CD14-positive monocyte (primary cell): ENCODE measurements at regions of chr7 and their contacts with region 1.

Region 1: DNA sequence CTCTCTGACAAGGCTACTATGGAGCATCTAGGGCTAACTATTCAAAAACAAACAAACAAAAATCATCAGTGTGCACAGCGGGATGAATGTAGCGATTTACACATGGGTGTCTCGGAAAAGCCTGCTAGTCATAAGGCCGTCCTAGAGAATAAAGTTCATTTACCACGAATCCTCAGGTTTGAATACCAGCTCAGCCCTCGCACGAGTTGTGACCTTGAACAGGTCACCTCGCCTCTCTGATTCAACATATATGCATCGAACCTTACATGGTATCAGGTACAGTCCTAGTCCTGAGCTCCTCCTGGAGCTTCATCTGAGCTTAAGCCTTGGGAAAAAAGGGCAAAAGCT is 572 bp downstream of the ATP5MF start:
- DNase-seq: no peak
- H3K4me3 ChIP-seq: peak overlapping the region; percentile 87 to 94 (median 87)
- H3K4me3 Mint-ChIP-seq: peak overlapping the region; percentile 85 to 91
- H3K27ac ChIP-seq: peak overlapping the region; percentile 90 to 91
- H3K27ac Mint-ChIP-seq: peak overlapping the region; percentile 87 to 96 (median 94)
- H3K4me1 ChIP-seq: peaks cover 14 to 23% of the 10 kb centered on the region in 2 donors
- H3K4me1 Mint-ChIP-seq: peaks cover 12% of the 10 kb centered on the region
- H3K27me3 ChIP-seq: no peaks in the 10 kb centered on the region
- H3K27me3 Mint-ChIP-seq: peaks cover 11 to 17% (median 12%) of the 10 kb centered on the region in 3 donors
- CTCF ChIP-seq: no peak

Region 2: GRCh38 chr7:99422186-99422585 is 43.2 kb before region 1 on chr7:
- intact Hi-C with region 1: no loop called
- DNase-seq: no peak
- H3K4me3 ChIP-seq: no peak overlapping the region
- H3K4me3 Mint-ChIP-seq: no peak overlapping the region
- H3K27ac ChIP-seq: no peak overlapping the region
- H3K27ac Mint-ChIP-seq: peak overlapping the region in 2 of 7 donors; percentile 33 to 72
- H3K4me1 ChIP-seq: no peaks in the 10 kb centered on the region
- H3K4me1 Mint-ChIP-seq: no peaks in the 10 kb centered on the region
- H3K27me3 ChIP-seq: no peaks in the 10 kb centered on the region
- H3K27me3 Mint-ChIP-seq: peaks cover 0 to 2% (median 0%) of the 10 kb centered on the region in 3 donors
- CTCF ChIP-seq: no peak

Region 3: GRCh38 chr7:99438573-99439480 is 26.6 kb before region 1 on chr7 and contains the starts of genes CPSF4 and PTCD1:
- intact Hi-C with region 1: loop called in 1 of 2 experiments (anchors 1 kb)
- DNase-seq: peak; percentile 87 to 91 (median 89)
- H3K4me3 ChIP-seq: peak within 1 kb of the TSS; percentile 59 to 84 (median 83)
- H3K4me3 Mint-ChIP-seq: peak within 1 kb of the TSS; percentile 96 to 98
- H3K27ac ChIP-seq: peak within 1 kb of the TSS; percentile 66 to 88
- H3K27ac Mint-ChIP-seq: peak within 1 kb of the TSS; percentile 88 to 96 (median 95)
- H3K4me1 ChIP-seq: peaks cover 21 to 23% of the 10 kb centered on the region in 2 donors
- H3K4me1 Mint-ChIP-seq: peaks cover 26% of the 10 kb centered on the region
- H3K27me3 ChIP-seq: no peaks in the 10 kb centered on the region
- H3K27me3 Mint-ChIP-seq: no peaks in the 10 kb centered on the region
- CTCF ChIP-seq: no peak
- polyA plus RNA-seq, gene CPSF4: 11.6 to 56.3 (median 12.3) TPM
- polyA plus RNA-seq, gene PTCD1: 0.74 to 4.3 (median 1.6) TPM